ENCODE measurements at regions of chr2 and their contacts with region 1.

Region 1: DNA sequence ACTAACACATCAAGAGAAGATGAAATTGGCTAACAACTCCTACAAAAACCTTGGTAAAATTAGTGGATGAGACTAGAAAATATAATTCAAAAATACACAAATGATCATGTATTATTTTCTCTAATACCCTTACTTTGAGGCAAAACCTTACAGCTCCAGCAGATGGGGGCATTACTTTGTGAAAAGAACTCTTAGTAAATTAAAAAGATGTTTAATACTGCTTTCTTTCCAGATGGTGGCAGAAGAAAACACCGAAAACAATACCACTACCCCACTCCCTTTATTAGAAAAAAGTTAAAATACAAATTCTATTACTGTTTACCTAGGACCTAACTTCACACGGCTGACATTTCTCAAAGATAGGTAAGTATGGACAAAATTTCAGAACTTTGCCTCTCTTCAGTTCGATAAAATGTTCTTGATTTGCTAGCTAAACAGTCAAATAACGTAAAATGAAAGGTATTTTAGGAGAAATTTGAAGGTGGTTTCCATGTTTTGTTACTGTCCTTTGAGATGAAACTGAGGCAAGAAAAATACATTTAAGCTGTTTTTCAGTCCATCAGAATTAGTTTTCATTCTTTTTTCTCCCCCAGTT is 30.6 kb downstream of the ORC4 start:
- DNase-seq: no peak
- H3K4me3 ChIP-seq: no peak overlapping the region
- H3K27ac ChIP-seq: no peak overlapping the region
- H3K4me1 ChIP-seq: peaks cover 3 to 17% (median 9%) of the 10 kb centered on the region in 4 donors
- H3K27me3 ChIP-seq: no peaks in the 10 kb centered on the region
- CTCF ChIP-seq: peak; percentile 72 to 78 (median 73)
- EP300 ChIP-seq: no peak
- POLR2A ChIP-seq: no peak

Region 2: DNA sequence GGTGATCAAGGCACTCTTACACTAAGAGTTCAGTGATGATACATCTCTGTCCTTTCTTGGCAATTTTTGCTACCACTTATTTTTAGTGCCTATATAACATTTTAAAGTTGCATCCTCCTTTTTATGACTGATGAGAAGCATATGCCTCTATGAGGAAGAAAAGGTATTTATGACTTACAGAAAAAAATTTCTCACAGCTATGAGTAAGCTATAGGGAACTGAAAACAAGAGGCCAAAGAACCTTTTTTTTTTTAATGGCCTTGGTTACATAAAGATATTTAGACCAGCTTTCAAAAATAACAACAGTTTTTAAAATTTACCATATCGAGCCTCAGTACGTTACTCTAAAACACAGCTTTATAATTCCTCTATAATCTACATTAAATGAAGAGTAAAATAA is 52.3 kb after region 1 on chr2:
- intact Hi-C with region 1: no loop called
- DNase-seq: no peak
- H3K4me3 ChIP-seq: no peak overlapping the region
- H3K27ac ChIP-seq: no peak overlapping the region
- H3K4me1 ChIP-seq: peaks cover 0 to 17% (median 14%) of the 10 kb centered on the region in 4 donors
- H3K27me3 ChIP-seq: no peaks in the 10 kb centered on the region
- CTCF ChIP-seq: no peak
- EP300 ChIP-seq: no peak
- POLR2A ChIP-seq: no peak

Region 3: GRCh38 chr2:148201075-148202004 is 211.4 kb after region 1 on chr2:
- intact Hi-C with region 1: loop called (anchors 5 kb)
- DNase-seq: no peak
- H3K4me3 ChIP-seq: no peak overlapping the region
- H3K27ac ChIP-seq: no peak overlapping the region
- H3K4me1 ChIP-seq: peaks cover 0 to 8% (median 5%) of the 10 kb centered on the region in 4 donors
- H3K27me3 ChIP-seq: no peaks in the 10 kb centered on the region
- CTCF ChIP-seq: peak; percentile 59 to 66 (median 61)
- EP300 ChIP-seq: no peak
- POLR2A ChIP-seq: no peak

Region 4: DNA sequence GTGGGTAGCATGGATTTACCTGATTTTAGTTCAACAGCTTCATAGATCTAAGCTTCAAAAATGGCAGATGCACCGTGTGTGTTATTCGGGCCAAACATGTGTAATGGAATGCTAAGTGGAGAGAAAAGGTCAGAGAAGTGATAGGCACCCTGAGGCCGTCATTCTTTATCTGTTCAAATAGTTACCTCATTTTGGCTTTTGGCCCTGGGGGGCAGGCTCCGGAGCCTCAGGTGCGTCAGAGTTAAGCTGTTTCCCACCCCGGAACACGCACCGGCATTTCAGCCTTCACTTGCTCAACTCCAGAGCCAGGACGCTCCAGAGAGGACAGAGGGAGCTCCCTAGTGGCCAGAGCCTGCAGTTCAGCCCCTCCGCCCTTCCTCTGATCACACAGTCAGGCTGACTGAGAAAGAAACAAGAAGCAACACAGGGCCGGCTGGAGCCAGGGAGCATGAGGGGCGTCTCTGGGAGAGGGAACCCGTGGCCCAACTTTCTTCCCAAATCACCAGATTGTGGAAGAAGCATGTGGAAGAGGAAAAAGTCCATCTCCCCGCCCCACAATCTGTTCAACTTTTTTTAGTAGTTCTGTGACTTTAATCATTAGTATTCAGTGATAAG is 519.5 kb after region 1 on chr2:
- intact Hi-C with region 1: loop called (anchors 5 kb)
- DNase-seq: peak; percentile 94
- H3K4me3 ChIP-seq: peak overlapping the region; percentile 22 to 51 (median 31)
- H3K27ac ChIP-seq: no peak overlapping the region
- H3K4me1 ChIP-seq: peaks cover 0 to 14% (median 6%) of the 10 kb centered on the region in 4 donors
- H3K27me3 ChIP-seq: no peaks in the 10 kb centered on the region
- CTCF ChIP-seq: peak; percentile 65 to 89 (median 68)
- EP300 ChIP-seq: no peak
- POLR2A ChIP-seq: no peak

Measured in esophagus muscularis mucosa (tissue), 4 donors.